Activated CD4-positive, alpha-beta T cell treated with anti-CD3 and anti-CD28 coated beads, Interleukin-2, amount 10 ng/mL, durations not matched to agents 7 days and 5 days (primary cell): ENCODE measurements at regions of chr2 and their contacts with region 1.

Region 1: DNA sequence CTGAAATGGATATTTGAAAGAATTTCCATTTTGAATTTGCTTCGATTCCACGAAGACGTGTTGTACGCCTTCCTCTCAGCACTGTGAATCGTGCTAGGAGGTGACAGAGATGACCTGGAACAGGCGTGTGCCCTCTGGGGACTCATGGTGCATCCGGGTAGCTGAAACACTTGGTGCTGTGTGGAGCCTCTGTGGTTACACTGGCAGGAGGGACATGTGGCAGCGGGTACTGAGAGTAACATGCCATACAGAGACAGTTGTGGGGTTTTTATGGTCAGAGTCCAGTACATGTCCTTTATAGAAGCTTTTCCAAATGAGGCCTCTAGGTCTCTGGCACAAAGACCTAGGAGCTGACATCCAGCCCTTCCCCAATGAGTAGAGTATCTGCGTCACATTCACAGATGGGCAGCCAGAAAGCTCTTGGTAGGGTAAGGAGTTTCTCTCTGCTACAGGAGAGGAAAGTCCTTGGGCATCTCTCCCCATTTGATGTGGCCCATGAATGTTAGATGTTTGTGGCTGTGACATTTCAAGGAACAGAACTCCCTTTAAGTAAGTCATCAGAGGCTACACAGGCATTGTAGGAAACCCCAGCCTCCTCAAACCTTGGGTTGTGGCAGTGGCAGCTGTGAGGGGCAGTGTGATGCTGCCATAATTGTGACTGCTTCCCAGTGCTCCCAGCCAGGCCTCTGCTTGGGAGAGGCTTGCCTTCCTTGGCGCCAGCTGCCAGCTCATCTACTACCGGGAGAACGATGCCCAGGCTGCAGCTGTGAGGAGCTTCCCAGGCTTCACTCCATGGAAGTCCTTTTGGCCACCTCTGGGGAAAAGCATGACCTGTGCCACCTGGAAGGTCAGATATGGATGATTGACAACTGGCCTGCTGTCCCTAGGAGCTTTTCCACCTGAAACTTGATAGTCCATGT is 80.6 kb downstream of the ACOXL start:
- DNase-seq: no peak
- H3K4me3 Mint-ChIP-seq: no peak overlapping the region
- H3K27ac Mint-ChIP-seq: no peak overlapping the region
- H3K4me1 Mint-ChIP-seq: peaks cover 3% of the 10 kb centered on the region
- H3K27me3 Mint-ChIP-seq: peaks cover 11% of the 10 kb centered on the region

Region 2: GRCh38 chr2:110823165-110823564 is 10.2 kb after region 1 on chr2:
- CTCF ChIA-PET with region 1: interaction called, 12 read pairs
- POLR2A ChIA-PET with region 1: no interaction called
- DNase-seq: no peak
- H3K4me3 Mint-ChIP-seq: no peak overlapping the region
- H3K27ac Mint-ChIP-seq: no peak overlapping the region
- H3K4me1 Mint-ChIP-seq: peaks cover 13% of the 10 kb centered on the region
- H3K27me3 Mint-ChIP-seq: peaks cover 42% of the 10 kb centered on the region